ENCODE measurements at regions of chrX and their contacts with region 1.

Region 1: GRCh38 chrX:56219700-56220099 is 12.5 kb upstream of the KLF8 start:
- DNase-seq: no peak
- ATAC-seq: no peak
- H3K4me3 ChIP-seq: no peak overlapping the region
- H3K27ac ChIP-seq: no peak overlapping the region
- H3K4me1 ChIP-seq: no peaks in the 10 kb centered on the region
- H3K27me3 ChIP-seq: no peaks in the 10 kb centered on the region

Region 2: DNA sequence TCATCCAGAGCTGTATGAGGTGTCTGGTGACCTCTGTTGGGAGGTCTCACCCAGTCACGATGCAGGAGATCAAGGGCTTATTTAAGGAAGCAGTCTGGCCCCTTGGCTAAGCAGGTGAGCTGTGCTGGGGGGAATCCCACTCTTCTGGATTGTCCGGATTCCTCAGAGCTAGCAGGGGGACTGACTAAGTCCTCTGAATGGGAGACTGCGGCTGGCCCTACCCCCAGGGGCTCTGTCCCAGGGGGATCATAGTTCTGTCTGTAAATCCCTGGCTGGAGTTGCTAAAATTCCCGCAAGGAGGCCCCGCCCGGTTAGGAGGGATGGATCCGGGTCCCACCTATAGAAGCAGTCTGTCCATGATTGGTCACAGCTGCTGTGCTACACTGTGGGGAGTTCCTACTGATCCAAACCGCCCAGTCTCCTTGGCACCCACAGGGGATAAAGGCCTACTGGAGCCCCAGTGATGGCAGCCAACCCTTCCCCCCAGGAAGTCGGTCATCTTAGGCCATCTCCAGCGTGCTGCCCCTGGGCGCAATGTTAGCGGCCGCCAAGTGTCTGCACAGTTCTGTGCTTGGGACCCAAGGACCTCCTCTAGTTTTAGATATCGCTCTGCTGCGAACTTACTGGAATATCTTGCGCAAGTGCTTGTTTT is 105.8 kb before region 1 on chrX:
- intact Hi-C with region 1: no loop called
- DNase-seq: peak in 1 of 2 donors; percentile 25
- ATAC-seq: no peak
- H3K4me3 ChIP-seq: no peak overlapping the region
- H3K27ac ChIP-seq: no peak overlapping the region
- H3K4me1 ChIP-seq: no peaks in the 10 kb centered on the region
- H3K27me3 ChIP-seq: no peaks in the 10 kb centered on the region

Region 3: DNA sequence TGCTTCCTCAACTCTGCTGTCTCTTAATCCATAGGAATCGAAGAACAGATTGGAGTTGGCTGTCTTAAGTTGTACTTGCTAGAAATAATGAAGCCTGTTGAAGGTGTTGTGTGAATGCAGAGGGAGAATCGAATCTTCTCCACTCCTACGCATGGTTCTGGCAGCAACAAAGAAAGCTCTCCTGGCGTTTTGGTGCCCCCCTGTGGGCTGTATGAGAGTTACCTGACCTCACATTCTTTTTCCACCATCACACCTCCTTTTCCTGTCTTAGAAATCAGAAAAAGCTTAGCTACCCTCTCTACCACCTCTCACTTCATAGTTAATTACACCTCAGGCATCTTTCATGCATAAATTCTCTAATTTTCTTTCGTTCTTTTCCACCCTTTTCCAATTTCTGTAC is 28.8 kb after region 1 on chrX:
- intact Hi-C with region 1: loop called in 1 of 2 experiments (anchors 2 kb)
- DNase-seq: peak in 1 of 2 donors; percentile 47
- ATAC-seq: peak; percentile 78
- H3K4me3 ChIP-seq: no peak overlapping the region
- H3K27ac ChIP-seq: no peak overlapping the region
- H3K4me1 ChIP-seq: no peaks in the 10 kb centered on the region
- H3K27me3 ChIP-seq: no peaks in the 10 kb centered on the region

Region 4: GRCh38 chrX:56729152-56729850 is 509.6 kb after region 1 on chrX and contains the start of gene NBDY:
- intact Hi-C with region 1: loop called in 1 of 2 experiments (anchors 5 kb)
- DNase-seq: peak; percentile 54 to 75
- ATAC-seq: peak; percentile 85
- H3K4me3 ChIP-seq: peak within 1 kb of the TSS; percentile 52 to 72
- H3K27ac ChIP-seq: peak within 1 kb of the TSS in 1 of 2 donors; percentile 72
- H3K4me1 ChIP-seq: no peaks in the 10 kb centered on the region
- H3K27me3 ChIP-seq: no peaks in the 10 kb centered on the region
- total RNA-seq, gene NBDY: 43.0 TPM